MCF 10A (cell line): ENCODE measurements at regions of chr12 and their contacts with region 1.

Region 1: GRCh38 chr12:46268590-46269558 is at the start of gene SLC38A1:
- DNase-seq: peak; percentile 96
- H3K4me3 Mint-ChIP-seq: no peak within 1 kb of the TSS
- H3K27ac Mint-ChIP-seq: no peak within 1 kb of the TSS
- H3K4me1 Mint-ChIP-seq: peaks cover 6% of the 10 kb centered on the region
- H3K27me3 Mint-ChIP-seq: no peaks in the 10 kb centered on the region
- CTCF ChIP-seq: no peak
- total RNA-seq, gene SLC38A1: 327 and 339 TPM in 2 replicates

Region 2: DNA sequence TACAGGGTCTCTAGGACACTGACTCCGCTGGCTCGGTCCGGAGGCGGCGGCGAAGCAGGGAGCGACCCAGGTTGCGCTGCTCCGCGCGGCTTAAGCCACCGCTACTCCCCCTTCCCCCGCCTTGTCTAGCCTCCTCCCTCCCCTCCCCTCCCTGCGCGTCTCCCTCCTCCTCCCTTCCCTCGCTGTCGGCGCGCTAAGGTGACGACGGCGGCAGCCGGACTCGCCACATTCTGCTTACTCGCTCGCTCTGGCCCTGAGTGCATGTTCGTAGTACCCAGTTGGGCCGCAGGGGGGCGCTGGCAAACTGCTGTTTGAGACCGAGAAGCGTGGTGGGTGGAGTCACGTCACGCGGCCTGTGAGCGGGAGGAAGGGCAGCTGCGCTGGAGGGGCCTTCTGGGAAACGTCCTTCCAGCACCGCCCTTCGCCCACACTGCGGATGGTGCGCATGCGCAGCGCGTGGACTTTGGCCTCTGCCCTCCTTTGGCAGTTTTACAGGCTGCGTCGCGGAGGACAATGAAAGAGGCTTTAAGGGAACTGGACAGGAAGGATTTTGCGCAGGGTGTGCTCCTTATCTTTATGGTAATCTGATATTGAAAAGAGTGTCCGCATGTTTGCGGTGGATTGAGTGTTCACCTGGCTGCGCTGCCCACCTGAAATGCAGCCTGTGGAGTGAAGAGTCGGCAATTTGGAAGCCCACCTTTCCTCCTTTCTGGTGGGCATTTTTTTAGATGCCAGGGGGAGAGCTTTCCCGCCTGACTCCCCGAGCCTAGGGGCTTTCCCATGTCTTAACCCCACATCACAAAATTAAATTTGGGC is 278.2 kb before region 1 on chr12 and contains the start of gene SCAF11:
- CTCF ChIA-PET with region 1: no interaction called
- POLR2A ChIA-PET with region 1: interaction called, 29 read pairs
- intact Hi-C with region 1: loop called (anchors 5 kb)
- DNase-seq: peak; percentile 99
- H3K4me3 Mint-ChIP-seq: peak within 1 kb of the TSS; percentile 91
- H3K27ac Mint-ChIP-seq: peak within 1 kb of the TSS; percentile 93
- H3K4me1 Mint-ChIP-seq: peaks cover 31% of the 10 kb centered on the region
- H3K27me3 Mint-ChIP-seq: no peaks in the 10 kb centered on the region
- CTCF ChIP-seq: peak; percentile 85
- total RNA-seq, gene SCAF11: 106 and 107 TPM in 2 replicates

Region 3: DNA sequence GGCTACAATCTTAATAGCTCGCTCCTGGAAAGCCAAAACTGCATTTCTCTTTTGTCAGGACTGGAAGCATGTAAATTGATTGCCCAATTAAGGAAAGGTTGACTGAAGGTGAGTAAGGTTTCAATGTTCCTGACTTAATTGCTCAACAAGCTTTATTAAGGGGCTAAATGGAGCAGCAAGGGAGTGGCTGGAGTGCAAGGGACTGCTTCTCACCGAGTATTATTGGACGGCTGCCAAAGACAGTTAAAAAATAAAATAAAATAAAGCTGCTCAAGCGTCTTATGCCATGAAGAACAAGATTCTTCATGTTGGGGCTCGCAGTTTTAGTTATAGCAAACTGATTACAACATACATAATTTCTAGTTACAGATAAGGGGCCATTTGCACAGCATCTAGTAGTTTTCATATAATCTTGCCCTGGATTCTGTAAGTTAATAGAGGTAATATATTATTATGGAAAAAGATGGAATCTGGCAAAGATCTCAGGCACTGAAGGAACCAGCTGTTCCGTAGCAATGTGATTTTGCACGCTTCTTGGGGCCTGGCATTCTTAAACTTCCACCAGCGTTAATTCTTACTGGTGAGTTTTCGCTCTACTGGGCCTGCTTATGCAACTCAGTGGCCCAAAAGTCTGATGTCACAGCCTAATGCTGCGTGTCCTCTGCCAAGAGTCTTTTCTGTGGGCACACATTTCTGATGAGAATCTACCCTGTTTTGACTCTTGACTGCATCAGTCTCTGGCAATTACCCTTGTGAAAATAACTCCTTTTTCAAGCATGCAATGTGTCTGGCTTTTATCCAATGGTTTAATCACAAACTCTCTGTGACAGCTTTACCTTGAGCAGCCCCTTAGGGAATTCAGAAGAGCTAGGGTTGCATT is 108.5 kb before region 1 on chr12:
- CTCF ChIA-PET with region 1: interaction called, 5 read pairs
- POLR2A ChIA-PET with region 1: interaction called, 73 read pairs
- intact Hi-C with region 1: no loop called
- DNase-seq: peak; percentile 93
- H3K4me3 Mint-ChIP-seq: peak overlapping the region; percentile 51
- H3K27ac Mint-ChIP-seq: peak overlapping the region; percentile 77
- H3K4me1 Mint-ChIP-seq: peaks cover 18% of the 10 kb centered on the region
- H3K27me3 Mint-ChIP-seq: no peaks in the 10 kb centered on the region
- CTCF ChIP-seq: no peak

Region 4: GRCh38 chr12:46253544-46254162 is 15.2 kb before region 1 on chr12:
- CTCF ChIA-PET with region 1: interaction called, 6 read pairs
- POLR2A ChIA-PET with region 1: interaction called, 16 read pairs
- intact Hi-C with region 1: no loop called
- DNase-seq: no peak
- H3K4me3 Mint-ChIP-seq: no peak overlapping the region
- H3K27ac Mint-ChIP-seq: peak overlapping the region; percentile 35
- H3K4me1 Mint-ChIP-seq: peaks cover 22% of the 10 kb centered on the region
- H3K27me3 Mint-ChIP-seq: no peaks in the 10 kb centered on the region
- CTCF ChIP-seq: no peak

Region 5: GRCh38 chr12:46364777-46365580 is 96.1 kb after region 1 on chr12:
- CTCF ChIA-PET with region 1: interaction called, 3 read pairs
- POLR2A ChIA-PET with region 1: interaction called, 133 read pairs
- intact Hi-C with region 1: loop called (anchors 2 kb)
- DNase-seq: peak; percentile 85
- H3K4me3 Mint-ChIP-seq: peak overlapping the region; percentile 93
- H3K27ac Mint-ChIP-seq: no peak overlapping the region
- H3K4me1 Mint-ChIP-seq: peaks cover 24% of the 10 kb centered on the region
- H3K27me3 Mint-ChIP-seq: no peaks in the 10 kb centered on the region
- CTCF ChIP-seq: no peak

Region 6: GRCh38 chr12:46556105-46556559 is 287.3 kb after region 1 on chr12:
- CTCF ChIA-PET with region 1: interaction called, 3 read pairs
- POLR2A ChIA-PET with region 1: interaction called, 14 read pairs
- intact Hi-C with region 1: loop called (anchors 5 kb)
- DNase-seq: peak; percentile 85
- H3K4me3 Mint-ChIP-seq: peak overlapping the region; percentile 17
- H3K27ac Mint-ChIP-seq: peak overlapping the region; percentile 68
- H3K4me1 Mint-ChIP-seq: peaks cover 73% of the 10 kb centered on the region
- H3K27me3 Mint-ChIP-seq: no peaks in the 10 kb centered on the region
- CTCF ChIP-seq: no peak

Region 7: DNA sequence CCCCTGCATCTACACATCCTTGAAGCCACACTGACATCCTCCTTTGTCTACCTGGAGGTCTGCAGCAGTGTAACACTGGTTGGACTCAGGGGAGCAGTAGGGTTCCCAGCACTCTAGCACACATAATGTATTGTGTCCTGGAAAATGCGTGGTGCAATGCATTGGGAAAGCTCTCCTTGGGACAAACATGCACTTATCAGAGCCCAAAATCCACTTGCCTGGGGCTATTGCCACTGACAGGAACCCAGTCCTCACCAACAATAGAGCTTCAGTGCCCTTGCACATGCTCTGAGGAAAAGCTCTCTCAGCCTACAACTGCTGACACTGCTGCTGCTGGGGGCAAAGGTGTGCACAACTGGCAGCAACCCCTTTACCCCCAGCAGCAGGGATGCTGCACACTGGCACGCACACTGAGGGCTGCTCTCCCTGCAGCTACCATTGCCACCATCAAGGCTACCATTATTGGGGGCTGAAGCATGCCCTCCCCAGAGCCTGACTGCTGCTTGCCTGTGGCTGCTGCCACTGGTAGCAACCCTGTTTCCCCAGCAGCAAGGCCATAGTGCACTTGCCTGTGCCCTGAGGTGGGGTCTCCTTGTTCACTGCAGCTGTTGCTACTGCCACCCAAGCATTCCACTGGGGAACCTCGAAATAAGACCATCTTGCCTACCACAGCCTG is 335.0 kb after region 1 on chr12:
- CTCF ChIA-PET with region 1: no interaction called
- POLR2A ChIA-PET with region 1: no interaction called
- intact Hi-C with region 1: no loop called
- DNase-seq: no peak
- H3K4me3 Mint-ChIP-seq: no peak overlapping the region
- H3K27ac Mint-ChIP-seq: no peak overlapping the region
- H3K4me1 Mint-ChIP-seq: no peaks in the 10 kb centered on the region
- H3K27me3 Mint-ChIP-seq: no peaks in the 10 kb centered on the region
- CTCF ChIP-seq: no peak

Region 8: GRCh38 chr12:46933947-46934346 is 665.1 kb after region 1 on chr12:
- CTCF ChIA-PET with region 1: interaction called, 3 read pairs
- POLR2A ChIA-PET with region 1: interaction called, 5 read pairs
- intact Hi-C with region 1: loop called (anchors 10 kb)
- DNase-seq: peak; percentile 68
- H3K4me3 Mint-ChIP-seq: no peak overlapping the region
- H3K27ac Mint-ChIP-seq: no peak overlapping the region
- H3K4me1 Mint-ChIP-seq: peaks cover 6% of the 10 kb centered on the region
- H3K27me3 Mint-ChIP-seq: no peaks in the 10 kb centered on the region
- CTCF ChIP-seq: peak; percentile 71